Endothelial cell of umbilical vein (primary cell): ENCODE measurements at regions of chr2 and their contacts with region 1.

Region 1: DNA sequence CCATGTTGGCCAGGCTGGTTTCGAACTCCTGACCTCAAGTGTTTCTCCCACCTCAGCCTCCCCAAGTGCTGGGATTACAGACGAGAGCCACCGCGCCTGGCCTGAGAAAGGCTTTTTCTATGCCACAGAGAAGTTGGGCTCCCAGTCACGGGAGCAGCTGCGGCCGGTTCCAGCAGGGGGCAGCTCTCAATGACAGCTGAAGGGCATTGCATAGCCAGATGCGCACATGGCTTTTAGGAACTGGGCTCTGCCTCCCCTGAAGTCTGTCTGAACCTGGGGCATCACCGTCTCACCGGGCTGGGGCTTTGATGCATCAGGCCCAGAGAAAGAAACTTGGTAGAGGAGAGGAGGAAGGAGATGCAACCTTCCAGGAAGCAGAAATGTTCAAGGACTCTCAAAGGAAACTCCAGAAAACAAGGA is 84.2 kb upstream of the LAPTM4A start:
- DNase-seq: peak; percentile 62
- H3K4me3 ChIP-seq: no peak overlapping the region
- H3K27ac ChIP-seq: no peak overlapping the region
- H3K4me1 ChIP-seq: peaks cover under 1% of the 10 kb centered on the region
- H3K27me3 ChIP-seq: peaks cover 0 to 4% of the 10 kb centered on the region in 2 experiments
- CTCF ChIP-seq: peak; percentile 76 to 91
- POLR2A ChIP-seq: no peak

Region 2: GRCh38 chr2:20190876-20191713 is 55.5 kb after region 1 on chr2:
- CTCF ChIA-PET with region 1: interaction called, 10 read pairs
- POLR2A ChIA-PET with region 1: no interaction called
- dilution Hi-C with region 1: no loop called
- intact Hi-C with region 1: loop called (anchors 1 kb)
- DNase-seq: peak; percentile 36
- H3K4me3 ChIP-seq: no peak overlapping the region
- H3K27ac ChIP-seq: no peak overlapping the region
- H3K4me1 ChIP-seq: no peaks in the 10 kb centered on the region
- H3K27me3 ChIP-seq: no peaks in the 10 kb centered on the region
- CTCF ChIP-seq: peak in 1 of 2 donors; percentile 40
- POLR2A ChIP-seq: no peak

Region 3: DNA sequence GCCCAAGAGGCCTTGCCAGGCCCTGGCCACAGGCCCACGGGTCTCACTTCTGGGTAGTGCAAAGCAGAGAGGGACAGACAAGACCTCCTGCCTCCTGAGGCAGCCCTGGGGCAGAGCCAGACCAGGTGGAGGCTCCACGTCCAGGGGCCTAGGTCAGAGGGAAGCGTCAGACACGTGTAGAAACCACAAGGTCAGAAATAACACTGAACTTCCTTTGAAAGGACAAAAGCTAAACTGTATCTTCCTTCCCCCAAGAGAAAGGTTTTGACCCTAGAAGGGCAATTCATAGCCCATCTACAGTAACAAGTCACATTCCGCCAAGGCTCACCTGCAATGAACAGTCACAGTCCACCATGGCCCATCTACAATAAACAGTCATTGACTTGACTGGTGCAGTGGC is 71.4 kb after region 1 on chr2:
- CTCF ChIA-PET with region 1: interaction called, 26 read pairs
- POLR2A ChIA-PET with region 1: no interaction called
- dilution Hi-C with region 1: no loop called
- intact Hi-C with region 1: no loop called
- DNase-seq: no peak
- H3K4me3 ChIP-seq: no peak overlapping the region
- H3K27ac ChIP-seq: no peak overlapping the region
- H3K4me1 ChIP-seq: no peaks in the 10 kb centered on the region
- H3K27me3 ChIP-seq: no peaks in the 10 kb centered on the region
- CTCF ChIP-seq: no peak
- POLR2A ChIP-seq: no peak

Region 4: DNA sequence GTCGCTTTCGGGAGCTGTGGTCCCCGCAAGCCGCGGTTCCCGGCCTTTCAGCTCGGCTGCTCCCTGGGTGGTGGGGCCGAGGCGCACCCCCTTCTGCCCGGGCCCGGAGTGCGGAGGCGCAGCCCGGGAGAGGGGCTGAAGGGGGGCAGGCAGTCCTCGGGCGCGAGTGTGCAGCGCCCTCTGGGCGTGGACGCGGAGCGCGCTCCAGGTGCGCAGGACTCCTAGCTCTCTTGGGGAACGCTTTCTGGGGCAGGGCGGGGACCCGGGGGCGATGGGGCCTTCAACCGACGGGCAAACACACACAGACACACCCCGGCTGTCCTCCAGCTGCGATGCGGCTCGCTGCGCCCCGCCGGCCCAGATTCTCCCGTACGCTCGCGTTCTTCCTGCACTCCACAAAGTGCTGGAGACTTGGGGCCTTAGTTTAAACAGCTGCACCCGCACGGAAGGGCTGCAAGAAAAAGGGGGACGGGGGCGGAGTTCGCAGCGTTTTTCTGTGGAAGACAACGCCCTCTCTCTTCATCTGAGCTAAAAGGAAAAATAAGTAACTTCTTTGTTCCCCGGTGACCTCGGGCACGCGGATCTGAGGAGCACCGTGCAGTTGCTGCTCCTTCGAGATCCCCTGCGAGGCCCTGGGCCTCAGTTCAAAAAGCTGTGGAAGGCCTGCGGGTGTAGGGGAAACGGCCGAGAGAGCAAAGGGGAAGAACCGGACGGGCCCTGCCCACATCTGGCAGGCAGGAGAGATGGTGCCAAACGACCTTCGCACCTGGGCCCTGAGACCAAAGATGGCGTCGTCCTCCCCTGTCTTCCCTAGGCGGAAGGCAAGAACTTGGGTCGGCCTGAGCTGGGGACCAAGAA is 89.9 kb after region 1 on chr2:
- CTCF ChIA-PET with region 1: interaction called, 76 read pairs
- POLR2A ChIA-PET with region 1: no interaction called
- dilution Hi-C with region 1: no loop called
- intact Hi-C with region 1: loop called (anchors 1 kb)
- DNase-seq: peak; percentile 60
- H3K4me3 ChIP-seq: peak overlapping the region; percentile 21 to 45 (median 45)
- H3K27ac ChIP-seq: no peak overlapping the region
- H3K4me1 ChIP-seq: peaks cover 6% of the 10 kb centered on the region
- H3K27me3 ChIP-seq: peaks cover 6 to 15% of the 10 kb centered on the region in 2 experiments
- CTCF ChIP-seq: peak; percentile 25 to 65
- POLR2A ChIP-seq: no peak

Region 5: DNA sequence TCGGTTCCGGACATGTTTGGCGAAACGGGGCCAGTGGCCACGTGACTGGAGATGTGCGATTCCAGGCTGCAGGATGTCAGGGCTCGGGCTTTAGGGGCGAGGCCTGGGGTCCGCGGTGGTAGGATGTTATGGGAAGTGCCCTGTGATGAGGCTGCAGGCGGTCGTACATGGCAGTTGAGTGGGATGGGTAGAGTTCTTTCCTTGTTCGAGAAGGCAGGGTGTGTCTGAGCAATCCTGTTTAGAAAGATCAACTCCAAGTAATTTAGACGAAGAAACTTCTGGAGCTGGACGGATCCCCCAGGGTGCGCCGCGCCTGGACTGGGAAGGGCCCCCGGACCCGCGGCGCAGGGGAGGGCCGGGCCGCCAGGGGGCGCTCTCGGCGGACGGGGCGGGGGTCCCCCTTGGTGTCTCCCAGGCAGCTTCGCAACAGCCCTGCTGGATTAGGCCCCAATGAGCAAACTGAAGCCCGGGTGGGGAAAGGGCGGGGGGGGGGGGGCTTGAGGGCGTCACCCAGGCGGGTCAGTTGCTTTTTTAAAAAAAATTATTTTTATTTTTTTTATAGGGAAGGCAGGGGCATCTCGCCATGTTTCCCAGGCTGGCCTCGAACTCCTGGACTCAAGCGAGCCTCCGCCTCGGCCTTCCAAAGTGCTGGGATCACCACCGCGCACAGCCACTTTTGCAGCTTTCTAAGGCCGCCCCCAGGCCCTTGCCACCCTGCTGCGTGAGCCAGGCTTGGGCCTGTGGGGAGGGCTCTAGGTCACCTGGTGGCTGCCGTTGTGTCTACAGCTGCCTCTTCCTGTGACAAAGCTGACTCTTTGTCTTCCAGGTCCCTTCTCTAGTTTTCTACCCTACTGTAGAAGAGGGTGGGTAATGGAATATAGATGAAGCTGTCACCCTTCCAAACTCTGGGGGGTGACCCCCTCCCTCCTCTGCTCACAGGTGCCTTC is 106.7 kb after region 1 on chr2:
- CTCF ChIA-PET with region 1: interaction called, 10 read pairs
- POLR2A ChIA-PET with region 1: no interaction called
- dilution Hi-C with region 1: no loop called
- intact Hi-C with region 1: no loop called
- DNase-seq: no peak
- H3K4me3 ChIP-seq: no peak overlapping the region
- H3K27ac ChIP-seq: no peak overlapping the region
- H3K4me1 ChIP-seq: no peaks in the 10 kb centered on the region
- H3K27me3 ChIP-seq: peaks cover 2 to 3% of the 10 kb centered on the region in 2 experiments
- CTCF ChIP-seq: peak; percentile 49 to 52
- POLR2A ChIP-seq: no peak

Region 6: DNA sequence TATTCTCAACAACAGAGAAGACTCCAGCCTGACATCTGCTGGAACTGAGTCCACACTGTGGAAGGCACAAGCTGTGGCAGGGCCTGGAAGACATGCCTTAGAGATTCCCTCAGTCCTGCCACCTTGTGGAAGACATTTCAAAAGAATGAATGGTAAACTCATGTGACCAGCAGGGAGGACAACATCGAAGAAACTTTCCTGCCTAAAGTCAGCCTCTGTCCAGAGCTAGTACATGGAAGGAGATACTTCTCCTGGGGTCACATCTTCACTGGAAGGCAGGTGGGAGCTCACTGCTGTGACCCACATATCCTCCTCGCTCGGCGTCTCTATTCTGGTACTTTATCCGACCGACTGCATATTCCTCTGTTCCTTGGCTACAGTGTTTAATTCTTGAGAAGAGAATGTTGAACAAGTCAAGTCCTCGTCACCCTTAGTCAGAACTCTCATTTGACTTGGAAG is 155.5 kb after region 1 on chr2:
- CTCF ChIA-PET with region 1: interaction called, 15 read pairs
- POLR2A ChIA-PET with region 1: no interaction called
- dilution Hi-C with region 1: no loop called
- intact Hi-C with region 1: loop called (anchors 1 kb)
- DNase-seq: peak; percentile 83
- H3K4me3 ChIP-seq: no peak overlapping the region
- H3K27ac ChIP-seq: no peak overlapping the region
- H3K4me1 ChIP-seq: peaks cover 14% of the 10 kb centered on the region
- H3K27me3 ChIP-seq: no peaks in the 10 kb centered on the region
- CTCF ChIP-seq: peak; percentile 67 to 72
- POLR2A ChIP-seq: no peak

Region 7: DNA sequence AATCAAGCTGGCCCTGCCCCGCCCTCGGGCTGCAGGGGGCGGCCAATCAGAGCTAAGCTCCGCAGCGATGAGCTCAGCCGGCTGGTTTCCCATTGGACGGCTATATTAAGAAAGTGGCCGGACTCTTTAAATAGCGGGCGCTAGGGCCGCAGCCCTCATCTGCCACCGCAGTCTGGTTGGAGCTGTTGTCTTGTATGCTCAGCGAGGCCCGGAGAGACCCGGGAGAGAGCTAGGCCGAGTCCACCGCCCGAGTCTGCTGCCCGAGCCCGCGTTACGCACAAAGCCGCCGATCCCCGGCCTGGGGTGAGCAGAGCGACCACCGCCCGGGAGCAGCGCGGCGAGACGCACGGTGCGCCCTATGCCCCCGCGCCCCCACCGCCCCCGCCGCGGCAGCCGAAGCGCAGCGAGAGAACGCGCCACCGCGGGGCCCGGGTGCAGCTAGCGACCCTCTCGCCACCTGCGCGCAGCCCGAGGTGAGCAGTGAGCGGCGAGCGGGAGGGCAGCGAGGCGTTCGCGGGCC is 311.3 kb after region 1 on chr2 and contains the start of gene RHOB:
- CTCF ChIA-PET with region 1: no interaction called
- POLR2A ChIA-PET with region 1: no interaction called
- dilution Hi-C with region 1: no loop called
- intact Hi-C with region 1: no loop called
- DNase-seq: peak; percentile 99
- H3K4me3 ChIP-seq: peak within 1 kb of the TSS; percentile 66 to 96 (median 94)
- H3K27ac ChIP-seq: peak within 1 kb of the TSS; percentile 79
- H3K4me1 ChIP-seq: peaks cover 27% of the 10 kb centered on the region
- H3K27me3 ChIP-seq: no peaks in the 10 kb centered on the region
- CTCF ChIP-seq: no peak
- POLR2A ChIP-seq: peak; percentile 100
- total RNA-seq, gene RHOB: 830 and 937 TPM in 2 replicates

Region 8: DNA sequence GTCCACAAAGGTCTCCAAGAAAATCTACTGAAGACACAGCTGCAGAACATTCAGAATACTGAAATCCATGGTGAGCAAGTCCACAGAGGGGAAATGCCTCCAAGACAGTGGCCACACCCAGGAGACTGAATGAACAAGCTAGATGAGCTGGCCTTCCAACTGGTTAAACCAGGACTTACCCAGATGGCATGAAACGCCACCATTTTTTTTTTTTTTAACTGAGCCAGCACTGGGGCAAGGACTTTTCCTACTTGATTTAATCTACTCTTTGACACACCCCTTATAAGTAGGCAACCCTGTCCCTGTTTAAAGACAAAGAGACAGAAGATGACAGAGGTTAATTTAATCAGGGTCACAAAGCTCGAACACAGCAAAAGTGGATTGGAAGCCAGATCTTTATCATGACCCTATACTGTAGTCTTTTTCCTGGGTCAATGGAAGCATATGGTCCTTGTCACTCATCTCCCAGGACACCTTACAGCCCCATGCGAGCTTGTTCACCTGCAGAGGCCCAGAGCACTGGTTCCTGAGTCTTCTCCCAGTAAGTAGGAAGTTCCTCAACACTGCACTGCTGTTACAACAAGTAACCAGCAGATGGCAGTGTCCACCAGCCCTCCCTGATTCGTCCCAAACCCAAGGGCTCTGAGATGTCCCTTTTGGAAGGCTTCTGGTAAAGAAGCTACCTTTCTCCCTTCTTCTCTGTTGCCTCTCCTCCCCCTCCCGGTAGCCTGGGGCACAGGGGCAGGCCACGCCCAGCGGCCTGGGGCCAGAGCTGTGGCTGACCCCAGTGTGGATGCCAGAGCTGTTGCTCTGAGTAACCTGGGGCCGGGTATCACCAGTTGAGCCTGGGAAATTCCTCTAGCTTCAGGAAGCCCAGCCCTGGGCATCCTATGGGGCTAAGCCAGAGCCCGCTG is 525.7 kb after region 1 on chr2:
- CTCF ChIA-PET with region 1: no interaction called
- POLR2A ChIA-PET with region 1: no interaction called
- dilution Hi-C with region 1: no loop called
- intact Hi-C with region 1: no loop called
- DNase-seq: peak; percentile 80
- H3K4me3 ChIP-seq: no peak overlapping the region
- H3K27ac ChIP-seq: no peak overlapping the region
- H3K4me1 ChIP-seq: peaks cover 8% of the 10 kb centered on the region
- H3K27me3 ChIP-seq: peaks cover 57 to 64% of the 10 kb centered on the region in 2 experiments
- CTCF ChIP-seq: peak; percentile 88 to 92
- POLR2A ChIP-seq: peak; percentile 45